ENCODE measurements at regions of chr12 and their contacts with region 1.

Region 1: DNA sequence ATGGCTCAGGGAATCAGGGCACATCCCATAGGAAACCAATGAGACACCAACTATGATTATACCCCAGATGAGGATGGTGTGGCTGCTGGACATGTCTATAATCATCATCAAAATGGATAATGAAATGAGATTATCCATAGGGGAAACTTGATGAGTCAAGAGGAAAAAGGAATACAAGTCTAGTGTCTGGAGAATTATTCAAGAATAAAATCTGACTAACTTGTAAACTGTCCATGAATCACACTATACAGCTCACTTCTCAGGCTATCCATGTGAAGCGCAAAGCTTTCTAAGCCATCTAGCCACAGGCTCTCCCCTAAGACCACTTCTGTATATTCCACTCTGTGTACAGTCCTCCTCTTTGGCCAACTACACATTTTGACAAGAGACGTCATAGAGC is 52.5 kb downstream of the DUSP16 start:
- DNase-seq: no peak

Region 2: GRCh38 chr12:11981121-11981733 is 528.9 kb before region 1 on chr12:
- intact Hi-C with region 1: no loop called
- DNase-seq: peak in 1 of 10 donors; percentile 78

Region 3: DNA sequence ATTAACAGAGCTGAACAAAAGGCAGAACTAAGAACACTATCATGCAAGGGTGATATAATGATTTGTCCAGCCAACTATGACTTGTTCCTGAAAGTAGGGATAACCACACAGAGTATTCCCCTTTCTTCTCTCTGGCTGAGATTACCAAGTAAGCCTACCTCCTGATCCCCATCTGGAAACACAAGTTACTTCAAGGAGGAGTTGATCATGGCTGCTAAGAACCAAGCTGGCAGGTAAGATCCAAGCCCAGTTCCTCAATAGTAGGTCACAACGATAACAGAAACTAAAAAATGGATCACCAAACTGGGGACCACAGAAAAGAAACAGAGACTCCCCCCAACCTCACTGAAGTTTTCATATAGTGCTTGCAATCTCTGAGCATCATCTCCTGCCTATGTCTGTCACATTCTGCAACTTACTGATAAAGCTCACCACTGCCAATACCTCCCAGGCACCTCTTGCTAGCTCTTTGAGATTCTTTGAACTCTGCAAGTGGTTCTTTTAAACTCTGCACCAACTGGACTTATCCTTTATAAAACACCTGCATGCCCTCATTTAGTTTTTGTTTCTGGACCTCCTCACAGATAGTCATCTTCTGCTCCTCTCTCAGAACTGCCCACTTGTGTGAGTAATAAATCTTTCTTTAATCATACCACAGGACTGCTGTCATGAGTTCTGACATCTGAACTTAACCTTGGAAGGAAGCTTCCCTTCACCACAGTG is 319.9 kb before region 1 on chr12:
- intact Hi-C with region 1: no loop called
- DNase-seq: no peak

Region 4: GRCh38 chr12:12474931-12475795 is 35.0 kb before region 1 on chr12:
- intact Hi-C with region 1: loop called (anchors 5 kb)
- DNase-seq: no peak